T-cell (primary cell): ENCODE measurements at regions of chr10 and their contacts with region 1.

Region 1: GRCh38 chr10:17415046-17415658 is 39.2 kb downstream of the ST8SIA6 start:
- DNase-seq: no peak
- ATAC-seq: no peak
- H3K4me3 ChIP-seq: no peak overlapping the region
- H3K4me3 Mint-ChIP-seq: no peak overlapping the region
- H3K27ac ChIP-seq: no peak overlapping the region
- H3K27ac Mint-ChIP-seq: no peak overlapping the region
- H3K4me1 ChIP-seq: peaks cover 0 to 7% of the 10 kb centered on the region in 2 experiments
- H3K4me1 Mint-ChIP-seq: peaks cover 20 to 35% (median 28%) of the 10 kb centered on the region in 3 donors
- H3K27me3 ChIP-seq: no peaks in the 10 kb centered on the region
- H3K27me3 Mint-ChIP-seq: peaks cover 0 to 1% of the 10 kb centered on the region in 2 donors

Region 2: GRCh38 chr10:17394854-17395253 is 20.3 kb before region 1 on chr10:
- CTCF ChIA-PET with region 1: interaction called in 1 of 2 experiments, 10 read pairs
- POLR2A ChIA-PET with region 1: no interaction called
- DNase-seq: no peak
- ATAC-seq: no peak
- H3K4me3 ChIP-seq: no peak overlapping the region
- H3K4me3 Mint-ChIP-seq: no peak overlapping the region
- H3K27ac ChIP-seq: no peak overlapping the region
- H3K27ac Mint-ChIP-seq: no peak overlapping the region
- H3K4me1 ChIP-seq: no peaks in the 10 kb centered on the region
- H3K4me1 Mint-ChIP-seq: peaks cover 0 to 5% (median 5%) of the 10 kb centered on the region in 3 donors
- H3K27me3 ChIP-seq: peaks cover 0 to 2% of the 10 kb centered on the region in 2 experiments
- H3K27me3 Mint-ChIP-seq: peaks cover 16 to 18% of the 10 kb centered on the region in 2 donors